ENCODE measurements at regions of chr2 and their contacts with region 1.

Region 1: DNA sequence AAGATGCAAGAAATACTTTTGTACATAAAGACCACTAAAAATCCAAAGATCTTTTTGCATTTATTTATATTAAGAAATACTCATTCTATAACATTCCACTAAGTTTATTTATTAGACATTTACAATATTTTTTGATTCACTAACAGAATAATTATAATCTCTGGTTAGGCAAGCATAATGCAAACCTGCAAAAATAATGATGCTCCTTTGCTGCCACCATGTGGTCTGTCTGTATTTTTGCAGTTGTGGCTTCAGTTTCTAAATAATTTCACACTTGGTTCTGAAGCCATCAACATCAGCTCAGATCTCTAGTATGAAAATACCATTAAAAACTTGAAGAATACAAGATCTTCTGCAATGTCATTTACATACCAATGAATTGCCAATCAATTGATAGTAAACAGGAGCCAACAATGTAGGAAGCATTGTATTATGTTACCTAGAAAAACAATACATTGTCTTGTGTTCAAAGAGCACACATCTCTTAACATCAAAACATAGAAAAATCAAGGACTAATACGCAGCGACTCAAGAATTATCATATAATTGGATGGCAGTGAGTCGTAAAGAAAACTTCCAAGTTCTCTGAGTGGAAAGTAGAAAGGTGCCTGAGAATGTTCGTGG is 28.8 kb upstream of the WDR75 start:
- DNase-seq: peak; percentile 40
- H3K4me3 ChIP-seq: no peak overlapping the region
- H3K27ac ChIP-seq: no peak overlapping the region
- H3K4me1 ChIP-seq: no peaks in the 10 kb centered on the region
- H3K27me3 ChIP-seq: no peaks in the 10 kb centered on the region
- CTCF ChIP-seq: peak; percentile 54

Region 2: GRCh38 chr2:188524519-188525113 is 887.8 kb before region 1 on chr2:
- intact Hi-C with region 1: loop called (anchors 10 kb)
- DNase-seq: no peak
- H3K4me3 ChIP-seq: no peak overlapping the region
- H3K27ac ChIP-seq: no peak overlapping the region
- H3K4me1 ChIP-seq: no peaks in the 10 kb centered on the region
- H3K27me3 ChIP-seq: no peaks in the 10 kb centered on the region
- CTCF ChIP-seq: peak; percentile 73

Region 3: DNA sequence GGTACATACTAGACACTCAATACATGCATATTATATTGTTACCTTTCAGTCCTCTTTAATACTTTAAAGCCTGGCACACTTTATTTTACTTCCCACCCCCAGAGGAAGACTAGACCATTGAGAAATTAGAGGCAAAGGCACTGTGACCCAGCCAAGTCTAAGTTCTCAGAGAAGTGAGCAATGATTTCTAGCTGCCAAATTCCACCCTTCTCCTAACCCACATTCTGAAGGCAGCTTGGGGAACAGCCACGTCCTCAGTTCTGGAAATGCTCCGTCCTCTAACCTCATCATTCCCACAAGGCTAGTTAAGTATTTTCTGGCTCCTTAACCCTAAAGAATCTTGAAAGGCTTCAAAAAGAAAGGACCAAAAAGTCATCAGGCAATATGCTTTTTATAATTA is 319.5 kb before region 1 on chr2:
- intact Hi-C with region 1: loop called (anchors 2 kb)
- DNase-seq: peak; percentile 22
- H3K4me3 ChIP-seq: no peak overlapping the region
- H3K27ac ChIP-seq: peak overlapping the region; percentile 13
- H3K4me1 ChIP-seq: no peaks in the 10 kb centered on the region
- H3K27me3 ChIP-seq: no peaks in the 10 kb centered on the region
- CTCF ChIP-seq: no peak

Region 4: DNA sequence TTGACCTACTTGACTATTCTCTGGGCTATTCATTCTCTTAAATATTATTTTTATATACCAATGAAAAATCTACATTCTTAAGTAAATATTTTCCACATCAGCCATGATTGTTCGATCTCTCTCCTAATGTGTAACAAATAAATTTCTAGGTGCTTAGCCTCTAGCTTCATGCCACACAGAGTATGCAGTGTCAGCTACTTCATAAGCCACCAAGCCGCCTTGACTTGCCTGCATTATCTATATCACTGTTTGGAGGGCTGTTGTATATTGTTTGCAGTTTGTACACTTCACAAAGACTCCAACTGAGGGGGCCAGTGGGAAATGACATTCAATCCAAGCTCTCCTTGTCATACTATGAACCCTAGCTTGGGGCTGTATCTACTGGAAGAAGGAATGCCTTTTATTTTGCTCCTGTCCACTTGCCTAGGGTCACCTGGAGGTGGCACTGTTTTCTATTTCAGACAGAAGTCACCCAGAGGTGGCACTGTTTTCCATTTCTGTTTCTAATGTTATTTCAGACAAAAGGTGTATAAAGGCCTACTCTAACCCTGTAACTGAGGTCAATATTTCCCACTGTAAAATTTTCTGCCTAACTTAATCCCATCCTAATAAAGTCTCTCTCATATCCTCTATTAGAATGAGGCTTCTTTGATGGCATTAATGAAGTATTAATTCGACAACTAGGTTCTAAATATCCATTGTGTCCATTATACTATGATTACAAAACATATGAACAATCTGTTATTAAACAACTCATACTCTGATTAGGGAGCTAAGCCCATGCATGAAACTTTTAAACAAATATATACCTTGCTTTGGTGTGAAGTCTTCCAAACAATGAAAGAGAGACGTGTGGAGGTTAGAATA is 269.3 kb before region 1 on chr2:
- intact Hi-C with region 1: loop called (anchors 5 kb)
- DNase-seq: peak; percentile 48
- H3K4me3 ChIP-seq: no peak overlapping the region
- H3K27ac ChIP-seq: no peak overlapping the region
- H3K4me1 ChIP-seq: no peaks in the 10 kb centered on the region
- H3K27me3 ChIP-seq: no peaks in the 10 kb centered on the region
- CTCF ChIP-seq: peak; percentile 75

Region 5: DNA sequence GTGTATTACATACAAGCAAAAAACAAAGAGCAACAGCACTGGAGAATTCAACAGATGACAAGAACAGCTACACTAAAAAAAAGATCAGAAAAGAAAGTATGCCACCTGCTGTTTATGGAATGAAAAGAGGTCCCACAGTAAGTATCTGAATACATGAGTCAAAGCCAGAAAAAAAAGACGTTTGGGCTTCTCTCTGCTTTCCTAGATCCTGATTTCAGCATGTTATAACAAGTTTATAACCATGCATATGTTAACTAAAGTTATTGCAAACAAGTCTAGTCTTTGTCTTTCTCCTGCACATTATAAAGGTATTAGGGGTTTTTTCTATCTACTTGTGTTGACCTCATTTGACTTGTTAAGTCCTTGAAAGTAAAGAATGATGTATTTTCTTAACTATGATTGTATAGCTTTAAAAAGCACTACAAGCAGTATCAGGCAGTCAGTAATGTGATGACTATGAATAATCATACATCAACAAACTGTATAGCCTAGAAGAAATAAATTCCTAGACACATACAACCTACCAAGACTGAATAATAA is 124.4 kb before region 1 on chr2:
- intact Hi-C with region 1: loop called (anchors 5 kb)
- DNase-seq: no peak
- H3K4me3 ChIP-seq: no peak overlapping the region
- H3K27ac ChIP-seq: peak overlapping the region; percentile 6
- H3K4me1 ChIP-seq: no peaks in the 10 kb centered on the region
- H3K27me3 ChIP-seq: no peaks in the 10 kb centered on the region
- CTCF ChIP-seq: peak; percentile 25

Measured in colonic mucosa (tissue), 4 donors.